CD14-positive monocyte (primary cell): ENCODE measurements at regions of chr2 and their contacts with region 1.

Region 1: GRCh38 chr2:136384531-136385303 is 266.8 kb upstream of the CXCR4 start:
- DNase-seq: peak; percentile 41 to 62 (median 60)
- H3K4me3 ChIP-seq: no peak overlapping the region
- H3K4me3 Mint-ChIP-seq: peak overlapping the region in 1 of 2 donors; percentile 19
- H3K27ac ChIP-seq: no peak overlapping the region
- H3K27ac Mint-ChIP-seq: peak overlapping the region in 5 of 7 donors; percentile 4 to 76 (median 41)
- H3K4me1 ChIP-seq: peaks cover 15 to 17% of the 10 kb centered on the region in 2 donors
- H3K4me1 Mint-ChIP-seq: peaks cover 32% of the 10 kb centered on the region
- H3K27me3 ChIP-seq: no peaks in the 10 kb centered on the region
- H3K27me3 Mint-ChIP-seq: peaks cover 0 to 2% (median 0%) of the 10 kb centered on the region in 3 donors
- CTCF ChIP-seq: peak; percentile 80

Region 2: GRCh38 chr2:135997380-135997779 is 387.3 kb before region 1 on chr2:
- intact Hi-C with region 1: loop called in 1 of 2 experiments (anchors 5 kb)
- DNase-seq: peak; percentile 47 to 65 (median 63)
- H3K4me3 ChIP-seq: no peak overlapping the region
- H3K4me3 Mint-ChIP-seq: peak overlapping the region in 1 of 2 donors; percentile 44
- H3K27ac ChIP-seq: peak overlapping the region; percentile 22 to 68
- H3K27ac Mint-ChIP-seq: peak overlapping the region; percentile 63 to 85 (median 73)
- H3K4me1 ChIP-seq: peaks cover 41 to 46% of the 10 kb centered on the region in 2 donors
- H3K4me1 Mint-ChIP-seq: peaks cover 45% of the 10 kb centered on the region
- H3K27me3 ChIP-seq: no peaks in the 10 kb centered on the region
- H3K27me3 Mint-ChIP-seq: peaks cover 0 to 2% (median 0%) of the 10 kb centered on the region in 3 donors
- CTCF ChIP-seq: peak; percentile 72

Region 3: DNA sequence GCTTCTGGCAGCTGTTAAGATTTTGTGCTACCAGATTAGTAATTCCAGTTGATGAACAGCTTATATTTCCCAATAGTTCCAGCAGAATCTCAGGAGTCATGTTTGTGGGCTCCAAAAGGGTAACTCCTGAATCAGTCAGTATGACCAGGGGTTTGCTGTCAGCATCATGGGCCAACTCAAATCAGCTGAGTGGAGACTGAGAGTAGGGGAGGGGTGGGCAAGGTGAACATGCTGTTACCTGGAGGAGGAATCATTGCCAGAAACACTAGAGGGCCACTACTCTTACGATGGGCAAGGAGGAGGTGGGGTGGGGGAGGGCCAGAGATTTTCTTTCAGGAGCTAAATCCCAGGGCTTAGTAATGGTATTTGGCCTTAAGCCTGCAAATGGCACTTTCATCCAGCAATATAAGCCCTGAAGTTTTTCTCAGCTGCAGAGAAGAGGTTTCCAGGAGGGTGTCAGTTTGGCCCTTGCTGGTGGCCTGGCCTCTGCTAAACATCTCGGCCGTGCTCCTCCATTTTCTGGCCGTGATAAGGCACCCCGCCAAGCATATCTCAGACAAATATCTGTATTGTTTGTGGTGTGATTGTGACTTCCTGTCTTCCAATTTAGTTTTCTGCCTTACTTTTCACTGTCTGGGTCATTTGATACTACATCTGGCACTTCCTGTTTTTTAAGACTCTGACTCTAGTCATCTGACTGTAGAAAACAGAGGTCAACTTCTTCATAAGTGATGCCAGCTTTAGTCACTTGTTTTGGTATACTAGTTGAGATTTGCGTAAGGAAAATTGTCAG is 146.2 kb before region 1 on chr2:
- intact Hi-C with region 1: loop called in 1 of 2 experiments (anchors 5 kb)
- DNase-seq: peak; percentile 93 to 98 (median 97)
- H3K4me3 ChIP-seq: no peak overlapping the region
- H3K4me3 Mint-ChIP-seq: peak overlapping the region in 1 of 2 donors; percentile 63
- H3K27ac ChIP-seq: peak overlapping the region; percentile 98 to 99
- H3K27ac Mint-ChIP-seq: peak overlapping the region; percentile 98 to 100 (median 99)
- H3K4me1 ChIP-seq: peaks cover 29 to 30% of the 10 kb centered on the region in 2 donors
- H3K4me1 Mint-ChIP-seq: peaks cover 55% of the 10 kb centered on the region
- H3K27me3 ChIP-seq: no peaks in the 10 kb centered on the region
- H3K27me3 Mint-ChIP-seq: peaks cover 0 to 9% (median 5%) of the 10 kb centered on the region in 3 donors
- CTCF ChIP-seq: no peak